ENCODE measurements at regions of chr11 and their contacts with region 1.

Region 1: GRCh38 chr11:58654079-58654907 is 31.8 kb downstream of the CNTF start:
- DNase-seq: peak; percentile 88
- H3K4me3 ChIP-seq: no peak overlapping the region
- H3K27ac ChIP-seq: no peak overlapping the region
- H3K4me1 ChIP-seq: no peaks in the 10 kb centered on the region
- H3K27me3 ChIP-seq: no peaks in the 10 kb centered on the region

Region 2: DNA sequence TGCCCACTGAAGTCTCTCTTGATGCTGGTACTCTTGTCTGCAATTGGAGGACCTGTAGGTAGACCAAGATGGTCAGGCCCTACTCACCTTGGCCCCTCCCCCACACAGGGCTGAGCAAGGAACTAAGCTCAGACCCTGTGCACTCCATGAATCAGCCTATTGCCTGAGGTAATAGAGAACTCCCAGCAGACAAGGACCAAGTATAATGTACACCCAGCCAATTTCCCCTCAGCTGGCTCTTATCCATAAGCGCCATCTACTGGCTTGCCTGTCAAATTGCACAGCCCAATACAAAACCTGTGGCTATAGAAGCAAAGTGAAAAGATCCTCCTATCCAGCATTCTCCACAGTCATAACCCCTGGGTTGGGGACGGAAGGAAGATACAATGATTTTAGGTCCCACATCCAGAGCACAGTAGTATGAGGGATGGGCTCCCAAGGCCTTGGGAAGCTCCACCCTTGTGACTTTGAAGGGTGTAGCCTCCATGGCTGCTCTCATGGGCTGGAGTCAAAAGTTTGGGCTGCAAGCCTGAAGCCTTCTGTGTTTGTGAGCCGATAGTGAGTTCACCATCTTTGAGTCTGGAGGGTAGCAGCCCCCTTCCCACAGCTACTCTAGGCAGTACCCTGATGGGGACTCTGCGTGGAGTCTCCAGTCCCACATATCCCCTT is 134.2 kb after region 1 on chr11:
- in situ Hi-C with region 1: loop called (anchors 10 kb)
- DNase-seq: peak; percentile 78
- H3K4me3 ChIP-seq: no peak overlapping the region
- H3K27ac ChIP-seq: no peak overlapping the region
- H3K4me1 ChIP-seq: 0 out of 2 replicates have a peak, but pooled peaks cover 7% of the 10 kb centered on the region
- H3K27me3 ChIP-seq: peaks cover 27% of the 10 kb centered on the region